Naive thymus-derived CD4-positive, alpha-beta T cell (primary cell): ENCODE measurements at regions of chr1 and their contacts with region 1.

Region 1: GRCh38 chr1:39886757-39887231 is 3.5 kb upstream of the TRIT1 start:
- DNase-seq: no peak
- ATAC-seq: no peak
- H3K4me3 ChIP-seq: no peak overlapping the region
- H3K4me3 Mint-ChIP-seq: no peak overlapping the region
- H3K27ac ChIP-seq: no peak overlapping the region
- H3K27ac Mint-ChIP-seq: no peak overlapping the region
- H3K4me1 ChIP-seq: peaks cover 9 to 11% of the 10 kb centered on the region in 2 donors
- H3K4me1 Mint-ChIP-seq: peaks cover 11 to 22% (median 15%) of the 10 kb centered on the region in 7 donors
- H3K27me3 ChIP-seq: no peaks in the 10 kb centered on the region
- H3K27me3 Mint-ChIP-seq: peaks cover under 1 to 12% (median 6%) of the 10 kb centered on the region in 5 donors

Region 2: DNA sequence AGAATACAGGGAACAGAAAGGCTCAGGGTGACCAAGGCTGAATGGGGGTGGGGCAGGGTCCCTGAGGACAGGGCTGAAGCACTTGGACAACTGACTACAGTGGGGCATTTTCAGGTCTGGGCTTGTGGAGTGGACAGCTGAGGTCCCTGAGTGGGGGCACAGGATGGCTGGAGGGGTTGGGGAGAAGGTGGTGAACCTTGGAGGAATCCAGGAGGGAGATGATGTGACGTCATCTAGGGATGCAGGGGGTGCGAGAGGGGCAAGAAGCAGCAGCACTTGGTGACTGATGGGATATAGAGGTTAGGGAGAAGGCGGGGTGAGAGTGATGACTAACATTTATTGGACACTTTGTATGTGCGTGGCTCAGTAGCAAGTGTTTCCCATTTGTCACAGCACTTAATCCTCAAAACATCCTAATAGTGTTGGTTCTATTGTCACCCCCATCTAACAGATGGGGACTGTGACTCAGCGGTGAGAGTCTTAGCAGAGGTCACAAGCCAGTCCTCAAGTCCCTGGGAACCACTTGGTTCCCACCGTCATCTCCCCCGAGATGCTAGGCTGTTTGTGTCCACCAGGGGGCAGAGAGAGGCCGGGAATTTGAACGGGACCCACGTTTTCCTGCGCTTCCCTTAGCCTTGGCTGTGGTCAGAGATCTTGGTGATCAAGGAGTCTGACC is 70.2 kb before region 1 on chr1:
- CTCF ChIA-PET with region 1: interaction called, 3 read pairs
- POLR2A ChIA-PET with region 1: no interaction called
- intact Hi-C with region 1: loop called in 1 of 2 experiments (anchors 1 kb)
- DNase-seq: peak; percentile 16 to 73 (median 41)
- ATAC-seq: peak; percentile 84
- H3K4me3 ChIP-seq: peak overlapping the region; percentile 31
- H3K4me3 Mint-ChIP-seq: peak overlapping the region; percentile 35 to 94 (median 85)
- H3K27ac ChIP-seq: no peak overlapping the region
- H3K27ac Mint-ChIP-seq: peak overlapping the region in 4 of 9 donors; percentile 43 to 85 (median 70)
- H3K4me1 ChIP-seq: no peaks in the 10 kb centered on the region
- H3K4me1 Mint-ChIP-seq: peaks cover 6 to 15% (median 8%) of the 10 kb centered on the region in 7 donors
- H3K27me3 ChIP-seq: peaks cover 0 to 2% of the 10 kb centered on the region in 2 donors
- H3K27me3 Mint-ChIP-seq: peaks cover 0 to 28% (median 4%) of the 10 kb centered on the region in 5 donors

Region 3: GRCh38 chr1:39845275-39846116 is 41.3 kb before region 1 on chr1:
- CTCF ChIA-PET with region 1: no interaction called
- POLR2A ChIA-PET with region 1: interaction called, 3 read pairs
- intact Hi-C with region 1: loop called (anchors 2 to 5 kb)
- DNase-seq: peak; percentile 51 to 93 (median 82)
- ATAC-seq: peak; percentile 98
- H3K4me3 ChIP-seq: no peak overlapping the region
- H3K4me3 Mint-ChIP-seq: peak overlapping the region; percentile 27 to 86 (median 64)
- H3K27ac ChIP-seq: peak overlapping the region; percentile 77
- H3K27ac Mint-ChIP-seq: peak overlapping the region; percentile 80 to 97 (median 94)
- H3K4me1 ChIP-seq: peaks cover 43 to 58% of the 10 kb centered on the region in 2 donors
- H3K4me1 Mint-ChIP-seq: peaks cover 37 to 64% (median 53%) of the 10 kb centered on the region in 7 donors
- H3K27me3 ChIP-seq: no peaks in the 10 kb centered on the region
- H3K27me3 Mint-ChIP-seq: no peaks in the 10 kb centered on the region

Region 4: DNA sequence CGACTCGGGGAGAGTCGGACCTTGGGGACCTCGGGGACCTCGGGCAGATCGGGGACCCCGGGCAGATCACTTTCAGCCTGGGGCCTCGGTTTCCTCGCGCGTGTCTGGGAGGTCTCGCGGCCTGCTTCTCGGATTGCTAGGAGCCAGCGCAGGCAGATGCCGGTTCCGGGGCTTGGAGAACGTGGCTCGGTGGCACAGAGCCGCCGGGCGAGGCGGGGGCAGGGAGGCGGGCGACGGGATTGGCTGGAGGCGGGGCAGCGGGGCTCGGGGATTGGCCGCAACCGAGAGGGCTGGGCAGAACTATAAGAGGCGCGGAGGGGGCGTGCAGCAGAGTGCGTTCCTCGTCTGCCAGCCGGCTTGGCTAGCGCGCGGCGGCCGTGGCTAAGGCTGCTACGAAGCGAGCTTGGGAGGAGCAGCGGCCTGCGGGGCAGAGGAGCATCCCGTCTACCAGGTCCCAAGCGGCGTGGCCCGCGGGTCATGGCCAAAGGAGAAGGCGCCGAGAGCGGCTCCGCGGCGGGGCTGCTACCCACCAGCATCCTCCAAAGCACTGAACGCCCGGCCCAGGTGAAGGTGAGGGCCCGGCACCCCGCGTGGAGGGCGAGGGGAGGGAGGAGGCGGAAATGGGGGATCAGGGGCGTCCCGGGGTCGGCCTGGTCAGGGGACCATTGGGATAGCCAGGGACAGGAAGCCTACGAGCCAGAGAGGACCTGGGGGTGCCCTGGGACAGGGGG is 68.2 kb after region 1 on chr1 and contains the start of gene MFSD2A:
- CTCF ChIA-PET with region 1: no interaction called
- POLR2A ChIA-PET with region 1: no interaction called
- intact Hi-C with region 1: loop called in 1 of 2 experiments (anchors 2 kb)
- DNase-seq: peak; percentile 80 to 92 (median 86)
- ATAC-seq: peak; percentile 98
- H3K4me3 ChIP-seq: peak within 1 kb of the TSS; percentile 84
- H3K4me3 Mint-ChIP-seq: peak within 1 kb of the TSS; percentile 89 to 97 (median 94)
- H3K27ac ChIP-seq: peak within 1 kb of the TSS; percentile 28
- H3K27ac Mint-ChIP-seq: peak within 1 kb of the TSS in 8 of 9 donors; percentile 51 to 95 (median 78)
- H3K4me1 ChIP-seq: peaks cover 7 to 18% of the 10 kb centered on the region in 2 donors
- H3K4me1 Mint-ChIP-seq: peaks cover 16 to 25% (median 20%) of the 10 kb centered on the region in 7 donors
- H3K27me3 ChIP-seq: no peaks in the 10 kb centered on the region
- H3K27me3 Mint-ChIP-seq: peaks cover 0 to 7% (median 0%) of the 10 kb centered on the region in 5 donors
- total RNA-seq, gene MFSD2A: 0.70 to 8.7 (median 4.4) TPM